Mammary epithelial cell (primary cell): ENCODE measurements at regions of chr6 and their contacts with region 1.

Region 1: GRCh38 chr6:28683944-28684538 is 158.4 kb downstream of the GPX5 start:
- DNase-seq: peak; percentile 46
- H3K4me3 ChIP-seq: peak overlapping the region in 1 of 3 experiments; percentile 9
- H3K27ac ChIP-seq: no peak overlapping the region
- H3K4me1 ChIP-seq: peaks cover 8% of the 10 kb centered on the region
- H3K27me3 ChIP-seq: no peaks in the 10 kb centered on the region
- CTCF ChIP-seq: peak; percentile 66 to 73

Region 2: DNA sequence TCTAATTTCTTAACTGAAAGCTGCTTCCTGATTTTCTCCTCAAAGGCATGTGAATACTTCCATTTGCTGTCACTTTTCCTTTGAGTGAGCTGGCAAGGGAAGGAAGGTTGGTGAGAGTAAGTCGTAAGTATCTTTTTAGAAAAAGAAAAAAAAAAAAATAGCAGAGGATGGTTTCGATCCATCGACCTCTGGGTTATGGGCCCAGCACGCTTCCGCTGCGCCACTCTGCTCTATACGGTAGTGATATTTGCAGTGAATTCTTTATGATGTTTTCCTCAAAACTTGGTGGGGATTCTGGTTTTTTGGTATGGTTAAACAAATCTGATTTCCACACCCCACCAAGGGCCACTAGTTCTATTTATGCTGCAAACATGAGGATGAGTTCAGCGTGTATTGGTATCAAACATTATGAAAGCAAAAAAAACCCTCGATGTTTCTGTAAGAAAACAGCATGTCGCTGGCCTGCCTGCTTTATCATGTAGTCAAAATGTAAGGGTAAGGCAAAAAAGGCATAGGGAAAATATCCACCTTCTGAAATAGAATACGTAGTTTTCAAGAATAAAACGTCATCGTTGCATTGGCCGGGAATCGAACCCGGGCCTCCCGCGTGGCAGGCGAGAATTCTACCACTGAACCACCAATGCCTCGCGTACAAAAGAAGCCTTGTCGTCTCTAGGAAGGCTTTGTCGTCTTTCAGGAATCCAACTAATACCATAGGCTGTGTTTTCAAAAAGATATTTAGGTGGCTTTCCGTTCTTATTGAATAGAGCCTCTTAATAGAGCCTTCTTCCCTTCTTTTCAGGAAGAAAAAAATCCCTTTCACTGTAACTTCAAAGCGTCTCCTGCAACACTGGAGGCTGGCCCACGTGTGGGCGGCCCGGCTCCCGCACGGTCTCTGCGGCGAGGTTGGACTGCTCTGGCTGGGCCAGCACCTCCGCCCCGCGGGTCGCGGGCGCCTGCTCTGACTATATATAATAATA is 781.4 kb before region 1 on chr6:
- CTCF ChIA-PET with region 1: no interaction called
- dilution Hi-C with region 1: no loop called
- in situ Hi-C with region 1: no loop called
- intact Hi-C with region 1: loop called (anchors 10 kb)
- DNase-seq: peak; percentile 80
- H3K4me3 ChIP-seq: peak overlapping the region; percentile 55 to 84 (median 68)
- H3K27ac ChIP-seq: peak overlapping the region; percentile 60
- H3K4me1 ChIP-seq: peaks cover 10% of the 10 kb centered on the region
- H3K27me3 ChIP-seq: no peaks in the 10 kb centered on the region
- CTCF ChIP-seq: no peak

Region 3: DNA sequence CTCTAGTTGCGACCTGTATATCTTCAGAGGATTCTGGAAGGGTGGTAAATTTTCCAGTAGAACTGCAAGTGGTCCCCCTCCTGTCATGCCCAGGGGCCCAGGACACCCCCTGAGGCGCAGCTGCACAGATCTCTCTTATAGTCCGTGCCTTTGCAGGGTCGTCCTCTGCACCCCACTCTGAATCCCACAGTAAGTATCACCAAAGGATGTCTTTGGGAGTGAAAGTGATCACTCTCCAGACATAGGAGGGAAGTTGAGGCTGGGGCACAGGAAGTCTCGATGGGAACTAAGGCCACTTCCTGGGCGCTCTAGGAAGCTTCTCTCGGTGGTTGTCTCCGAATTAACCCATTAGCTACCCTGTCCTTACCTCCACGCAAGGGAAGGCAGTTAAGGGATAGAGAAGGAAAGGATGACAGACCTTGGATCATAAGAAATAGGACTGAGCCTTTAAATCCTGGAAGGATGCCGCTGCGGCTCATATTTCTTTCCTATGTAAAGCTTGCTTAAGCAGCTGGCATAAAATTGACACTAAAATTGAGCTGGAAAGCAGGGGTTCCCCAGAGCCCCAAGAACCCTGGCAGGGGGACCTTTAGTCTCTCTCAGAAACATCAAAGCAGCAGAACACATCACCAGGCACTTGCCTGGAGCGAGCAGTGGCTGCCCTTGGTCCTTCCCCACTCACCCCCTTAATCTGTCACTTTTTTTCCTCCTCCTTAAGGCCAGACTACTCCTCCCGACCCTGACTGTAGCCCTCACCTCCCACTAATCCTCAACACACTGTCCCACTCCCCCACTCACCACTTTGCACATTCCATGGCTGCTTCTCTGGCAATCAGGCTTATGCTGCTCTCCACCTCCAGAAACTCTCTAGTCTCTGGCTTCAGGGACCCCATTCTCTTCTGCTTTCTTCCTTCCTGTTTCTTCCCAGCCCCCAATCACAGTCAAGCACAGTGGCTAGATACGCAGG is 431.7 kb before region 1 on chr6 and contains the start of gene ZKSCAN4:
- CTCF ChIA-PET with region 1: no interaction called
- dilution Hi-C with region 1: no loop called
- in situ Hi-C with region 1: no loop called
- intact Hi-C with region 1: loop called (anchors 10 kb)
- DNase-seq: peak; percentile 82
- H3K4me3 ChIP-seq: peak within 1 kb of the TSS; percentile 87 to 93 (median 89)
- H3K27ac ChIP-seq: peak within 1 kb of the TSS; percentile 8
- H3K4me1 ChIP-seq: peaks cover 8% of the 10 kb centered on the region
- H3K27me3 ChIP-seq: no peaks in the 10 kb centered on the region
- CTCF ChIP-seq: no peak
- total RNA-seq, gene ZKSCAN4: 3.6 to 5.8 TPM

Region 4: DNA sequence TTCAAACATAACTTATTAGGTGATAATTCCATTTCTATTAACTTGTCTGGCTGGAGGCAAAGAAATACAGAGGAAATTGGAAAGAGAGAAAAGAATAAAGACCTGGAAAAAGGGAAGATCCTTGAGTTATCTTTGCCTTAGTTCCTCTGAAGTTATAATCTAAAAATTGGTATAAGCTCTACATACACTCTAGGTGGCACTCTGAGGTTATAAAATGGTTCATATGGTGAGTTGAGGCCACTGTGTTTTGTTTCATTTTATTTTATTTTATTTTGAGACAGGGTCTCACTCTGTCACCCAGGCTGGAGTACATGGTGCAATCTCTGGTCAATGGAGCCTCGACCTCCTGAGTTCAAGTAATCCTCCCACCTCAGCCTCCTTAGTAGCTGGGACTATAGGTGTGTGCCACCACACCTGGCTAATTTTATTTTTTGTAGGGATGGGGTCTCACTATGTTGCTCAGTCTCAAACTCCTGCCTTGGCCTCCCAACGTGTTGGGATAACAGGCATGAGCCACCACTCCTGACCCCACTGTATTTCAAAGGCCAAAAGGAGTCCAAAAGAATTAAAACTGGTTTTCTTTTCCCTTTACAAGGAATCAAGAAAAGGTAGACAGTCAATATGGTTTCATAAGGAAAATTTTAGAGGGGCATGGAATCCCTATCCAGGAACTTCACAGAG is 187.8 kb before region 1 on chr6:
- CTCF ChIA-PET with region 1: no interaction called
- dilution Hi-C with region 1: no loop called
- in situ Hi-C with region 1: loop called in 1 of 2 experiments (anchors 25 kb)
- intact Hi-C with region 1: loop called (anchors 1 kb)
- DNase-seq: no peak
- H3K4me3 ChIP-seq: no peak overlapping the region
- H3K27ac ChIP-seq: no peak overlapping the region
- H3K4me1 ChIP-seq: no peaks in the 10 kb centered on the region
- H3K27me3 ChIP-seq: no peaks in the 10 kb centered on the region
- CTCF ChIP-seq: peak; percentile 17 to 32

Region 5: DNA sequence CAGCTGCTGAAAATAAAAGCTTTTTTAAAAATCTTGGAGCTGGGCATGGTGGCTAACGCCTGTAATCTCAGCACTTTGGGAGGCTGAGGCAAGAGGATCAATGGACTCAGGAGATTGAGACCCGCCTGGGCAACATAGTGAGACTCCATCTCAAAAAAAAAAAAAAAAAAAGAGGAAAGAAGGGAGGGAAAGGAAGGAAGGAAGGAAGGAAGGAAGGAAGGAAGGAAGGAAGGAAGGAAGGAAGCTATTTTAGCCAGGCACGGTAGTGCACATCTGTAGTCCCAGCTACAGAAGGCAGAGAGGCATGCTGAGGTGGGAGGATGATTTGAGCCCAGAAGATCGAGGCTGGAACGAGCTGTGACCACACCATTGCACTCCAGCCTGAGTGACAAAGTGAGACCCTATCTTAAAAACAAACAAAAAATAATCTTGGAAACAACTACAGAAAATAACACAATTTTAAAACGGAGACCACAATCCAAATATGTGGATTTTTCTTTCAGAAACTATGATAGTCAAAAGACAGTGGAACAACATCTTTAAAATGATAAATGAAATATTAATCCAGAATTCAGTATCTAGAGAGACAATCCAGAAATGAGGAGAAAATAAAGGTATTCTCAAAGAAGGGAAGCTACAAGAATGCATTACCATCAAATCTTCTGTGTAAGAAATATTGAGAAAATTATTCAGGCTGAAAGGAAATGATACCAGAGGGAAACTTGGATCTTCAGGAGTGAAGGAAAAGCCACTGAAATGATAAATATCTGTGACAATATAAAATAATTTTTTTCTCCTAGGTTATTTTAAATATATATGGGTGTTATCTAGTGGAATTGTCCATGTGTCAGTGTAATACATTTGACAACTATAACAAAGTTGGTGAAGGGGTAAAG is 23.6 kb after region 1 on chr6:
- CTCF ChIA-PET with region 1: no interaction called
- dilution Hi-C with region 1: no loop called
- in situ Hi-C with region 1: no loop called
- intact Hi-C with region 1: no loop called
- DNase-seq: no peak
- H3K4me3 ChIP-seq: no peak overlapping the region
- H3K27ac ChIP-seq: no peak overlapping the region
- H3K4me1 ChIP-seq: peaks cover 4% of the 10 kb centered on the region
- H3K27me3 ChIP-seq: peaks cover 2% of the 10 kb centered on the region
- CTCF ChIP-seq: no peak

Region 6: GRCh38 chr6:28789553-28790083 is 105.6 kb after region 1 on chr6:
- CTCF ChIA-PET with region 1: no interaction called
- dilution Hi-C with region 1: no loop called
- in situ Hi-C with region 1: no loop called
- intact Hi-C with region 1: loop called (anchors 5 kb)
- DNase-seq: peak; percentile 76
- H3K4me3 ChIP-seq: peak overlapping the region; percentile 49 to 72 (median 54)
- H3K27ac ChIP-seq: no peak overlapping the region
- H3K4me1 ChIP-seq: peaks cover 5% of the 10 kb centered on the region
- H3K27me3 ChIP-seq: peaks cover 32% of the 10 kb centered on the region
- CTCF ChIP-seq: no peak

Region 7: DNA sequence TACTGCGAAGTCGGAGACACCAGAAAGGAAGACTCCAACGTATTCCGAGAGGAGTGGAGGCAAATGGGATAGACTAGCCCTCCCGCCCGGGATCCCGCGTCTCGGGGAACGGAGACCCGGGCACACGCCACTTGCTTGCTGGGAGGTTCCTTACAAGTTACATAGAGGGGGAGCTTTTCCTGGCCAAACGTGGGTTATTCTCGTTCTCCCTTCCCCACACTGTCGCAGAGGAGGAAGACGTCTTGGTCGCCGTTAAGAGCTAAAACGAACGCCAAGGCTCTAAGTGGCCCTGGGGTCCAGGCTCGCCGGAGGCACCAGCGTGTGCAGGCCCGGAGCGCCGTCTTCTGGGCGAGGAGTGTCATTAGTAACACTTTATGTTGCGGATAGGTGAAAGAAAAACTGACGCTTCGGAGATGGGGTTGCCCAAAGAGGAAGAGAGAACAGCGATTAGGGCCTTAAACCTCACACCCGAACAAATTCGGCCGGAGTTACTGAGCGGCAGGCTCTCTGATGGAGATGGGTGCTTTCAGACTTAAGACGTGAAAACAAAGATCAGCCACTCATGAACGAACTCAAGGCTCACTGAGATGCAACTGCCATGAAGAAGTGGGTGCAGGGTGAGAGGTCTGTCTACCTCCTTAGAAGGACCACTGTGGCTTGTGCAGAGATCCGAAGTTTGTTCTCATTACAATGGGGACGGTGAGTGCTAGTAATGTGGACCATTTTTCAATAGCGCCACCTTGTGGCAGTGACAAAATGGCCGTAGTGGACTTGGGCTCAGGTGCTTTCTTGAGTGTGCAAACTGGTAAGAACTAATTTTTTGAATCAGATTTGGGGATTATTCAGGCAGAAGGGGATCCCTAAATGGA is 332.8 kb after region 1 on chr6:
- CTCF ChIA-PET with region 1: no interaction called
- dilution Hi-C with region 1: no loop called
- in situ Hi-C with region 1: loop called in 1 of 2 experiments (anchors 25 kb)
- intact Hi-C with region 1: loop called (anchors 1 kb)
- DNase-seq: peak; percentile 66
- H3K4me3 ChIP-seq: peak overlapping the region; percentile 53 to 57 (median 54)
- H3K27ac ChIP-seq: no peak overlapping the region
- H3K4me1 ChIP-seq: peaks cover 9% of the 10 kb centered on the region
- H3K27me3 ChIP-seq: no peaks in the 10 kb centered on the region
- CTCF ChIP-seq: peak; percentile 84 to 93